Activated naive CD4-positive, alpha-beta T cell treated with anti-CD3 and anti-CD28 coated beads, Interleukin-2, amount 10 ng/mL, durations not matched to agents 7 days and 5 days (primary cell): ENCODE measurements at regions of chr1 and their contacts with region 1.

Region 1: DNA sequence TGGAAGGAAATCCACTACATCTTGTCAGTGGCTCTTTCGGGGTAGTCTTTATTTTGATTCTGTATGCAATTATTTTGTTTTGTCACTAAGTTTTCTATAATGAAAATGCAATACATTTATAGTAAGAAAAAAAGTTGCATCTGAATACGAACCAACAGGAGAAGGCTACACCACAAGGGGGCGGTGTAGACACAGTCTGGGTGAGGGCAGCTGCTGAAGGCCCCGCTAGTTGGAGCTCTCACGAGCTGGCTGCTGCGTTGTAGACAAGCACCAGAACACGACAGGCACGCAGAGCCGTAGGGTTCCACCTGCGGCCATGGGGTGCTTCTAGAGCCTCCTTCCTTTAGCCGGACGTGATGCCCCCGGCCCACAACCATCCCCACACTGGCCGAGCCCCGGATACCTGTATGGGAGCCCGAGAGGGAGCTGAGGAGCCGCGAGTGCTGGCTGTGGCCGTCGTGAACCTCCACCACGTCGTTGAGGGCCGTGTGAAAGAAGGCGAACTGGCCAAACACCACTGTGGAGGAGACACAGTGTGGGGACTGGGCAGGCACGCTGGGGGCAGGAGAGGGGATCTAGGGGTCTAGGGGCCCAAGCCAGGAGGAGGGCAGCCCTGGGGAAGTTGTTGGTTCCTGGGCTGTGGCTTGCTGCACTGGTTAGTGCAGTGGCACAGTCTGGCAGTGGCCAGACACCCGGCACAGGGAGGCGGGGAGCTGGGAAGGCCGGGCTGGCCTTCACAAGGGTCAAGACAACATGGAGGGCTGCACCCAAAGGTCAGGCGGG is 160.8 kb downstream of the ZSCAN20 start:
- DNase-seq: peak; percentile 93
- H3K4me3 Mint-ChIP-seq: no peak overlapping the region
- H3K27ac Mint-ChIP-seq: no peak overlapping the region
- H3K4me1 Mint-ChIP-seq: no peaks in the 10 kb centered on the region
- H3K27me3 Mint-ChIP-seq: peaks cover 22% of the 10 kb centered on the region

Region 2: DNA sequence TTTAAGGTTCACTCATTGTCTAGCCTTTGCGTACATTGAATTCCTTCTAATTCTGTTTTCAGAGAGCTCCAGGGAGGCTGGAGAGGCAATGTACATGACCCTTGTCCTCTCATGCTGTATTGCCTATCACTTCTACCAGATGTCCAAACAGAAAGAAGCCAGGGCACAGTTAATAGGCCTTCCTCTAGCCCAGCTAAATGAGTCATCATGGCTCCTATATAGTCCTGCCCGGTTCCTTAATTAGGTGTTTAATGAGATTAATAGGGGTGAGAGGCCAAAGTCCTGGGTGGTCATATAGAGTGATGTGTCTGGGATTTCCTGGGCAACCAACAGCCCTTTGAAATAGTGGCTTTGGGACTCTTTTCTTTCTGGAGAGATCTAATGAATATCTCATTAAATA is 84.5 kb before region 1 on chr1:
- CTCF ChIA-PET with region 1: no interaction called
- DNase-seq: no peak
- H3K4me3 Mint-ChIP-seq: no peak overlapping the region
- H3K27ac Mint-ChIP-seq: no peak overlapping the region
- H3K4me1 Mint-ChIP-seq: no peaks in the 10 kb centered on the region
- H3K27me3 Mint-ChIP-seq: peaks cover 6% of the 10 kb centered on the region

Region 3: GRCh38 chr1:33618636-33619035 is 14.6 kb before region 1 on chr1:
- CTCF ChIA-PET with region 1: interaction called, 14 read pairs
- DNase-seq: no peak
- H3K4me3 Mint-ChIP-seq: no peak overlapping the region
- H3K27ac Mint-ChIP-seq: no peak overlapping the region
- H3K4me1 Mint-ChIP-seq: peaks cover 5% of the 10 kb centered on the region
- H3K27me3 Mint-ChIP-seq: peaks cover 34% of the 10 kb centered on the region

Region 4: GRCh38 chr1:33818071-33818470 is 184.9 kb after region 1 on chr1:
- CTCF ChIA-PET with region 1: no interaction called
- DNase-seq: no peak
- H3K4me3 Mint-ChIP-seq: no peak overlapping the region
- H3K27ac Mint-ChIP-seq: no peak overlapping the region
- H3K4me1 Mint-ChIP-seq: no peaks in the 10 kb centered on the region
- H3K27me3 Mint-ChIP-seq: peaks cover 3% of the 10 kb centered on the region

Region 5: DNA sequence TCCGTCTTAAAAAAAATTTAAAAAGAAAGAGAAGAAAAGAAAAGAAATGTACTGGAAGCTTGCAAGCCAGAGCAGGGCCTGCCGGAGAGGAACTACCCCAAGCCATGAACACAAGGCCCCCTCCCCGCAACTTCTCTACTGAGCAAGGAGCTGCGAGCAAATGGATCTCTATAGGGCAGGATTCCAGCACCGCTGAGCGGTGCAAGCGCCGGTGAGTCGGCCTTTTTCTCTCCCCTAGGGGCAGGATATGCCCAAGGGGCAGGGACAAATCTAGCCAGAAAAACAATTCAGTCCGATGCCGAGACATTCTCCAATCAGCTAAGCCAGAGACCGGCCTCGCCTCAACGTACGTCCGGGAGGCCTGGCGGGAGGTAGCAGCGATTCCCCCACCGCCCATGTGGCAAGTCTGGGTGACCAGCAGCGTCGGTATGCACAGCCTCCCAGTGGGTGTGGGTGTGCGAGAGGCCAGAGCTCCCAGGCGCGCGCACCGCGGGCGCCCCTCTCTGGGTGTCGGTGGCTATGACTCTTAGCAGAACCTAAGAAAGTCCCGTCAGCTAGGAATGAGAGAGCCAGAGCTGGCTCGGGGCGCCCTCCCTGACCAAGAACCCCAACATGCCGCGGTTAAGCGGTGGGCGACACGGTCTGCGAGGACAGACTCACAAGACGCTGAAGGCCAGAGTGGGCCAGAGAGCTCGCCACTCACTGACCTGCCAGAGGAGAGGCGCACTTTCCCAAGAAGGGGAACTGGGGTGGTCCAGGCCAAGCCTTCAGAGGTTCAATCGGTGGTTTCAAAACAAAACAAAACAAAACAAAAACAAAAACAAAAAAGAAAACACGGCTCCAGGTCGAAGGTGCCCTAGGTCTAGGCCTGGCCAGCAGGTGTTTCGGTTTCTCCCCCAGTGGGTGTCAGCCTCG is 529.9 kb after region 1 on chr1:
- CTCF ChIA-PET with region 1: interaction called, 12 read pairs
- DNase-seq: peak; percentile 36
- H3K4me3 Mint-ChIP-seq: no peak overlapping the region
- H3K27ac Mint-ChIP-seq: no peak overlapping the region
- H3K4me1 Mint-ChIP-seq: peaks cover 12% of the 10 kb centered on the region
- H3K27me3 Mint-ChIP-seq: peaks cover 84% of the 10 kb centered on the region

Region 6: GRCh38 chr1:34597877-34598514 is 964.8 kb after region 1 on chr1:
- CTCF ChIA-PET with region 1: interaction called, 12 read pairs
- DNase-seq: peak; percentile 70
- H3K4me3 Mint-ChIP-seq: no peak overlapping the region
- H3K27ac Mint-ChIP-seq: no peak overlapping the region
- H3K4me1 Mint-ChIP-seq: no peaks in the 10 kb centered on the region
- H3K27me3 Mint-ChIP-seq: peaks cover 7% of the 10 kb centered on the region

Region 7: GRCh38 chr1:34742667-34743270 is 1109.6 kb after region 1 on chr1:
- CTCF ChIA-PET with region 1: interaction called, 15 read pairs
- DNase-seq: peak; percentile 83
- H3K4me3 Mint-ChIP-seq: no peak overlapping the region
- H3K27ac Mint-ChIP-seq: no peak overlapping the region
- H3K4me1 Mint-ChIP-seq: no peaks in the 10 kb centered on the region
- H3K27me3 Mint-ChIP-seq: peaks cover 18% of the 10 kb centered on the region